Aorta (tissue), 5 donors: ENCODE measurements at regions of chr12 and their contacts with region 1.

Region 1: GRCh38 chr12:53746592-53747092 is 5.1 kb downstream of the CISTR start:
- DNase-seq: peak; percentile 96 to 99
- ATAC-seq: peak; percentile 94
- H3K4me3 ChIP-seq: no peak overlapping the region
- H3K27ac ChIP-seq: no peak overlapping the region
- H3K4me1 ChIP-seq: no peaks in the 10 kb centered on the region
- H3K27me3 ChIP-seq: no peaks in the 10 kb centered on the region

Region 2: DNA sequence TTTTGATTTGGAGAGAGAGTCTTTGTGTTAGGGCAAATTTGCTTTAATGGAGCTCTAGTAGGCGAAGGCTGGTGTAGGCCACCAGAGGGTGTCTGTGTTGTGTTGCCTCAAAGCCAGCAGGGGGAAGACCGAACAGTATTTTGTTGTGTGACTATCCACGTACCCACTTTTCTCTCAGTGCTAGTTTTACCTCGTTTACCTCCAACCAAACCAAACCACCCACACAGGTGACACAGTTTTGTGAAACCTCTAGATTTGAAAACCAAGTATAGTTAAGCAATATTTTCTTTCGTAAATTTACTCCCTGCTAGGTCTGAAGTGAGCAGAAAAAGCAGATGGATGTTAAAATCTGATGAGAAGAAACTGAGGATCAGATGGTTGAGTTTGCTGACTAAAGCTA is 203.1 kb before region 1 on chr12:
- intact Hi-C with region 1: loop called in 1 of 2 experiments (anchors 5 kb)
- DNase-seq: peak in 1 of 2 donors; percentile 63
- ATAC-seq: peak; percentile 90
- H3K4me3 ChIP-seq: no peak overlapping the region
- H3K27ac ChIP-seq: peak overlapping the region; percentile 16 to 88
- H3K4me1 ChIP-seq: no peaks in the 10 kb centered on the region
- H3K27me3 ChIP-seq: no peaks in the 10 kb centered on the region

Region 3: DNA sequence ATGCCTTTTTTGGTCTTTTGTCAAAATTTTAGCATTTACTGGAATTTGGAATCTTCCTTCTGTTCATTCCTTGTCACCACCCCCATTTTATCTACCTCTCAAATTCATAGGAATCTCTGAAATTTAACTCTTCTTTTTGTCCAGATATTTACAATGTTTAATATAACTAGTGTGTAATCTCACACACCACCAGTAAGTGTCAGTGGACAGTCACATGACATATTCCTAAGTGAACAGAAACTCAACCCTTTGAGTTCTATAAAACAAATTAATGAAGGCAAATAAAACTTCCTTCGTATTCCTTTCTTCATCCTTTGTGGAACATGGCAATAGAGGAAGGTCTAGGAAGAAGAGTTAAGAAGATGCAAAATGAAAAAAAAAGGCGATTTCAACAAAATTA is 147.1 kb before region 1 on chr12:
- intact Hi-C with region 1: no loop called
- DNase-seq: no peak
- ATAC-seq: no peak
- H3K4me3 ChIP-seq: no peak overlapping the region
- H3K27ac ChIP-seq: no peak overlapping the region
- H3K4me1 ChIP-seq: peaks cover 6 to 7% of the 10 kb centered on the region in 2 donors
- H3K27me3 ChIP-seq: no peaks in the 10 kb centered on the region

Region 4: DNA sequence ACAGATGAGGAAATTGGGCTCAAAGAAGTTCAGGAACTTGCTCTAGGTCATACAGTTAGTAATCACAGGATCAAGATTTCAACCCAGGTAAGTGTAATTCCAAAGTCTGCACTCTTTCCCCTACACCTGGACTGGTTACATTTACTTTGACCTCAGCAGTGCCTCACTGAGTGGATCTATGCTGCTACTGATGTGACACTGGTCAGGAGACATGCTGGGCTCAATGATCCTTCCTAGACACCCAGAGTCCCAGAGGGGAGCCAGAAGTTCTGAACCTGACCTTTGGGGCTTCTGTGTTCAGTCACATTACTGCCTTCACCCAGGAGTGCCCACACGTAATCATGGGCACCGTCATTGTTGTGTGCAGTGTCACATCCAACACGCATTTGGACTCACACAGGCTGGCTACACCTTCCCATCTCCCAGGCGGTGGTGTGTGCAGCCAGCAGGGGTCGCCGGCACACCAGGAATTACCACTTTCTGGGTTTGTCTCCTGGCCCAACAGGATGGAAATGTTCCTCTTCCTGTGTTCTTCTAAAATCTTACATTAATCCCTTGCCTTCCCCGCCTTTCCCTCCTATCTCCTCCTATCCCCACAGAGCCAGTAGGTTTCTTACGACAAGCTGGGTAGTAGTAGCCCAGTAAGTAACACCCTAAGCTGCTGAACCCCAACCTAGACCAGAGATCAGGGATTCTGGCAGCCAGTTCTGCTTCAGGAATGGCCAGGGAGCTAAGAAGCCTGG is 45.0 kb before region 1 on chr12:
- intact Hi-C with region 1: loop called (anchors 1 kb)
- DNase-seq: peak; percentile 87 to 95
- ATAC-seq: peak; percentile 93
- H3K4me3 ChIP-seq: no peak overlapping the region
- H3K27ac ChIP-seq: no peak overlapping the region
- H3K4me1 ChIP-seq: no peaks in the 10 kb centered on the region
- H3K27me3 ChIP-seq: no peaks in the 10 kb centered on the region